Gastrocnemius medialis (tissue), 4 donors: ENCODE measurements at regions of chr18 and their contacts with region 1.

Region 1: GRCh38 chr18:32301976-32302743 is 112.3 kb downstream of the MEP1B start:
- DNase-seq: peak; percentile 22 to 58
- ATAC-seq: peak; percentile 94 to 98
- H3K4me3 ChIP-seq: peak overlapping the region in 2 of 4 donors; percentile 24 to 25
- H3K27ac ChIP-seq: peak overlapping the region; percentile 66 to 85 (median 78)
- H3K4me1 ChIP-seq: peaks cover 16 to 23% of the 10 kb centered on the region in 2 donors
- H3K27me3 ChIP-seq: no peaks in the 10 kb centered on the region
- CTCF ChIP-seq: no peak
- POLR2A ChIP-seq: no peak

Region 2: DNA sequence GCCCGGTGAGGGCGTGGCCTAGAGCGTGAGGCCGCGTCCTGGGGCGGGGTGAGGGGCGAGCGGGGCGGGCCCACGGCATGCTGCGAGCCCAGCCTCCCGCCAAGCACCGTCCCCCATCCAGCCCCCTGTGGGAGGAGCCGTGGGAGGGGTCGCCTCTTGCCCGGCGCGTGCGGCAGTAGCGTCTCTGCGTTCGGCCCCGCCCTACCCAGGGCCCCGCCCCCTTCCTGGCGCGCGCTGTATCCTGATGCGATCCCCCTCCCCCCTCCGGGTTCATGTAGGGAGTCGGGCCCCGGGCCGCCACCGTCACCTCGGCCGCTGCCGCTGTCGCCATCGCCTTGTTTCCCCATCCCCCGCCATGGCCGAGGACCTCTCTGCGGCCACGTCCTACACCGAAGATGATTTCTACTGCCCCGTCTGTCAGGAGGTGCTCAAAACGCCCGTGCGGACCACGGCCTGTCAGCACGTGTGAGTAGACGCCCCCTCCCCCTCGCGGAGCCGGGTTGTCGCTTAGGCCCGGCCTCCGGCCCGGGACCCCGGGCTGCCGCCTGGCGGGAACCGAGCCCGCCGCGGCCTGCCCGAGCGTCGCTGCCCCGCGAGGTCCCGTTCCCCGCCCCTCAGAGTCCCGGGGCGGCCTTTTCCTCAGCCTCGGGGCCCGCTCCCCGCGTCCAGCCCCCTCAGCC is 209.6 kb before region 1 on chr18:
- in situ Hi-C with region 1: no loop called
- intact Hi-C with region 1: loop called (anchors 10 kb)
- DNase-seq: peak; percentile 98
- ATAC-seq: peak; percentile 82 to 85
- H3K4me3 ChIP-seq: peak overlapping the region; percentile 85 to 97 (median 92)
- H3K27ac ChIP-seq: peak overlapping the region; percentile 98 to 100 (median 100)
- H3K4me1 ChIP-seq: peaks cover 40 to 43% of the 10 kb centered on the region in 2 donors
- H3K27me3 ChIP-seq: no peaks in the 10 kb centered on the region
- CTCF ChIP-seq: no peak
- POLR2A ChIP-seq: peak; percentile 64 to 80

Region 3: GRCh38 chr18:32362485-32362884 is 60.3 kb after region 1 on chr18:
- in situ Hi-C with region 1: no loop called
- intact Hi-C with region 1: loop called (anchors 5 kb)
- DNase-seq: no peak
- ATAC-seq: no peak
- H3K4me3 ChIP-seq: no peak overlapping the region
- H3K27ac ChIP-seq: no peak overlapping the region
- H3K4me1 ChIP-seq: no peaks in the 10 kb centered on the region
- H3K27me3 ChIP-seq: no peaks in the 10 kb centered on the region
- CTCF ChIP-seq: no peak
- POLR2A ChIP-seq: no peak

Region 4: GRCh38 chr18:32383050-32383819 is 81.1 kb after region 1 on chr18:
- in situ Hi-C with region 1: no loop called
- intact Hi-C with region 1: loop called (anchors 5 kb)
- DNase-seq: peak in 1 of 2 donors; percentile 2
- ATAC-seq: peak; percentile 77 to 86
- H3K4me3 ChIP-seq: no peak overlapping the region
- H3K27ac ChIP-seq: peak overlapping the region; percentile 48 to 62 (median 56)
- H3K4me1 ChIP-seq: peaks cover 40 to 43% of the 10 kb centered on the region in 2 donors
- H3K27me3 ChIP-seq: no peaks in the 10 kb centered on the region
- CTCF ChIP-seq: no peak
- POLR2A ChIP-seq: no peak